ENCODE measurements at regions of chr10 and their contacts with region 1.

Region 1: GRCh38 chr10:59240582-59241183 is 64.2 kb downstream of the PHYHIPL start:
- DNase-seq: no peak
- H3K4me3 ChIP-seq: no peak overlapping the region
- H3K27ac ChIP-seq: no peak overlapping the region
- H3K4me1 ChIP-seq: peaks cover 0 to 6% (median 0%) of the 10 kb centered on the region in 4 donors
- H3K27me3 ChIP-seq: no peaks in the 10 kb centered on the region
- CTCF ChIP-seq: peak; percentile 61 to 91

Region 2: GRCh38 chr10:59382831-59383295 is 142.2 kb after region 1 on chr10:
- intact Hi-C with region 1: no loop called
- DNase-seq: no peak
- H3K4me3 ChIP-seq: no peak overlapping the region
- H3K27ac ChIP-seq: peak overlapping the region; percentile 64 to 81
- H3K4me1 ChIP-seq: peaks cover 4 to 34% (median 13%) of the 10 kb centered on the region in 4 donors
- H3K27me3 ChIP-seq: no peaks in the 10 kb centered on the region
- CTCF ChIP-seq: no peak

Region 3: DNA sequence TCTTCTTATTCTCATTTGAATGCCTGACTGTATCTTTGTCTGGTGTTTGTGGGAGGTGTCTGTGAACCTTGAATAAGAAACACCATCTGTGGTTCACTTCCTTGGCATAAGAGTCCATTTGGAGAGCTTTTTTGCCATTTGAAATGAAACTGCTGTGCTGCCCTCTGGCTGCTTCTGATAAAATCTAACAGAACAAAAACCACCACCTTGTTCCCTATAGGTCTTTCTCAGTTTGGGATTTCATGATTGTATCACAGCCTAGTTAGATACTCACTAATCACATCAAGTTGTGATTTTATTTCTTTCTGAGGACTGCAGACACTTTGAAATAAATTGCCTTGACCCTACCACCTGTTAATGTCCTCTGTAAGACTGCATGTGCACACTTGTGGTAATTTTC is 224.4 kb after region 1 on chr10:
- intact Hi-C with region 1: loop called (anchors 10 kb)
- DNase-seq: no peak
- H3K4me3 ChIP-seq: no peak overlapping the region
- H3K27ac ChIP-seq: no peak overlapping the region
- H3K4me1 ChIP-seq: peaks cover 0 to 40% (median 0%) of the 10 kb centered on the region in 4 donors
- H3K27me3 ChIP-seq: no peaks in the 10 kb centered on the region
- CTCF ChIP-seq: peak; percentile 29 to 35

Measured in tibial artery (tissue), 4 donors.